PC-9 (cell line): ENCODE measurements at regions of chr2 and their contacts with region 1.

Region 1: GRCh38 chr2:199409759-199410529 is 47.8 kb downstream of the SATB2 start:
- DNase-seq: no peak
- H3K4me3 ChIP-seq: no peak overlapping the region
- H3K27ac ChIP-seq: no peak overlapping the region
- H3K4me1 ChIP-seq: no peaks in the 10 kb centered on the region
- H3K27me3 ChIP-seq: no peaks in the 10 kb centered on the region
- CTCF ChIP-seq: no peak

Region 2: GRCh38 chr2:199378948-199379650 is 30.8 kb before region 1 on chr2:
- CTCF ChIA-PET with region 1: no interaction called
- POLR2A ChIA-PET with region 1: interaction called, 20 read pairs
- intact Hi-C with region 1: no loop called
- DNase-seq: peak in 1 of 2 experiments; percentile 46
- H3K4me3 ChIP-seq: no peak overlapping the region
- H3K27ac ChIP-seq: no peak overlapping the region
- H3K4me1 ChIP-seq: no peaks in the 10 kb centered on the region
- H3K27me3 ChIP-seq: no peaks in the 10 kb centered on the region
- CTCF ChIP-seq: no peak